T-cell (primary cell): ENCODE measurements at regions of chr5 and their contacts with region 1.

Region 1: DNA sequence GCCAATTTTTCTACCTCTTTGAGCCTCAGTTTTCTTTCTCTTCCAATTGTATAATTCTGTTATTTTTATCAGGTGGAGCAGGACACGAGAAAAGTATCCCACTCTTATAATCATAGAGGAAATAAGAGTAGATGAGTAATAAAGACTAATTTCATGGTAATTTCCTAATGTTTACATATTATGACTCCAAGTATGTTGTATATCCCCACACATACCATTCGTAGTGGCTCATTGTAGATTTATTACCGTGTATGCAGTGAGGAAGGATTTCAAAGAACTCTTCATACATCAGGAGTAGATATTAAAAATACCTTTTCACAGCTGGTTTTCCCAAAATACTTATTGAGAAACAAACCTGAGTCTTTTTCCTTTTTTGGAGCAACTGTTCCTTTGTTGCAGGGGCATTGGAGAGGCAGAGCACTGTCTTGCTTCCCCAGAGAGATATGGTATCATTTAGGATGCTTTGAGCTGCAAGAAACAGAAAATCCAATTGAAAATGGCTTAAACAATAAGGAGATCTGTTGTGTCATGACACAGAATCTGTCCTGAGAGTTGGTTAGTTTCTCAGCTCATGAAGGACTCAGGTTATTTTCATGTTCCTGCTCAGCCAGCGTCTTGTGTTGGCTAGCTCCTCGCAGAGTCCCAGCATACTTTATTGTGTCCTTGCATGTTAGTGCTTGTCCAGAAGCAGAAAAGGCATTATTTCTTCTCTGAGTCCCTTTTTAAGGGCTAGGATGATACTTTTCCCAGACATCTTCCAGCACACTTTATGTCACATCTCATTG is 291.2 kb downstream of the ARHGAP26 start:
- DNase-seq: no peak
- ATAC-seq: no peak
- H3K4me3 ChIP-seq: no peak overlapping the region
- H3K4me3 Mint-ChIP-seq: no peak overlapping the region
- H3K27ac ChIP-seq: no peak overlapping the region
- H3K27ac Mint-ChIP-seq: no peak overlapping the region
- H3K4me1 ChIP-seq: no peaks in the 10 kb centered on the region
- H3K4me1 Mint-ChIP-seq: peaks cover 3 to 12% (median 4%) of the 10 kb centered on the region in 3 donors
- H3K27me3 ChIP-seq: no peaks in the 10 kb centered on the region
- H3K27me3 Mint-ChIP-seq: no peaks in the 10 kb centered on the region

Region 2: GRCh38 chr5:143413958-143414669 is 352.8 kb after region 1 on chr5:
- CTCF ChIA-PET with region 1: no interaction called
- POLR2A ChIA-PET with region 1: interaction called in 1 of 2 experiments, 12 read pairs
- DNase-seq: no peak
- ATAC-seq: peak in 3 of 4 experiments; percentile 36 to 66 (median 63)
- H3K4me3 ChIP-seq: no peak overlapping the region
- H3K4me3 Mint-ChIP-seq: peak overlapping the region in 1 of 3 donors; percentile 38
- H3K27ac ChIP-seq: no peak overlapping the region
- H3K27ac Mint-ChIP-seq: peak overlapping the region; percentile 46 to 79
- H3K4me1 ChIP-seq: peaks cover 0 to 12% of the 10 kb centered on the region in 2 experiments
- H3K4me1 Mint-ChIP-seq: peaks cover 10 to 65% (median 30%) of the 10 kb centered on the region in 3 donors
- H3K27me3 ChIP-seq: no peaks in the 10 kb centered on the region
- H3K27me3 Mint-ChIP-seq: no peaks in the 10 kb centered on the region

Region 3: GRCh38 chr5:143693651-143694252 is 632.4 kb after region 1 on chr5:
- CTCF ChIA-PET with region 1: no interaction called
- POLR2A ChIA-PET with region 1: interaction called in 1 of 2 experiments, 14 read pairs
- DNase-seq: peak in 8 of 35 experiments; percentile 1 to 54 (median 4)
- ATAC-seq: peak in 3 of 4 experiments; percentile 53 to 71 (median 61)
- H3K4me3 ChIP-seq: no peak overlapping the region
- H3K4me3 Mint-ChIP-seq: no peak overlapping the region
- H3K27ac ChIP-seq: peak overlapping the region; percentile 44
- H3K27ac Mint-ChIP-seq: peak overlapping the region; percentile 27 to 30
- H3K4me1 ChIP-seq: peaks cover 0 to 14% of the 10 kb centered on the region in 2 experiments
- H3K4me1 Mint-ChIP-seq: peaks cover 0 to 27% (median 15%) of the 10 kb centered on the region in 3 donors
- H3K27me3 ChIP-seq: no peaks in the 10 kb centered on the region
- H3K27me3 Mint-ChIP-seq: no peaks in the 10 kb centered on the region